Sciatic nerve (tissue), 2 donors: ENCODE measurements at regions of chr20 and their contacts with region 1.

Region 1: DNA sequence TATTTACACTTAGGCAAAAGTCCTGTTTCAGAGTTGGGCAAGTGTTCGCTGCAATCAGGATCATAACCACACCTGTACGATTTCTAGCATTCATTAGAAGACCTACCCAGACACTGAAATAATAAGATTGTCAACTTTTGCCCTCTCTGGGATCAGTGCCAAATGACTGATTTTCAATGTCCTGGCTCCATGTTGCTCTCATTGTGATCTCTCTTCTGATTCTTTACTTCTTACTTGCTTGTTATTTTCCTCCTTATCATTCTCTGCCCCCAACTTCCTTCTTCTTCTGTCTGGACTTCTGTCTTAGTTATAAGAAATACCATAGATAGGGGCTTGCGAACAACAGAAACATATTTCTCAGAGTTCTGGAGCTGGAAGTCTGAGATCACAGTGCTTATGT is 94.4 kb upstream of the BMP2 start:
- DNase-seq: no peak
- ATAC-seq: no peak

Region 2: GRCh38 chr20:4726710-4727397 is 1946.2 kb before region 1 on chr20:
- intact Hi-C with region 1: loop called (anchors 5 kb)
- DNase-seq: no peak
- ATAC-seq: peak; percentile 49

Region 3: GRCh38 chr20:6525447-6526303 is 147.4 kb before region 1 on chr20:
- intact Hi-C with region 1: no loop called
- DNase-seq: no peak
- ATAC-seq: no peak

Region 4: DNA sequence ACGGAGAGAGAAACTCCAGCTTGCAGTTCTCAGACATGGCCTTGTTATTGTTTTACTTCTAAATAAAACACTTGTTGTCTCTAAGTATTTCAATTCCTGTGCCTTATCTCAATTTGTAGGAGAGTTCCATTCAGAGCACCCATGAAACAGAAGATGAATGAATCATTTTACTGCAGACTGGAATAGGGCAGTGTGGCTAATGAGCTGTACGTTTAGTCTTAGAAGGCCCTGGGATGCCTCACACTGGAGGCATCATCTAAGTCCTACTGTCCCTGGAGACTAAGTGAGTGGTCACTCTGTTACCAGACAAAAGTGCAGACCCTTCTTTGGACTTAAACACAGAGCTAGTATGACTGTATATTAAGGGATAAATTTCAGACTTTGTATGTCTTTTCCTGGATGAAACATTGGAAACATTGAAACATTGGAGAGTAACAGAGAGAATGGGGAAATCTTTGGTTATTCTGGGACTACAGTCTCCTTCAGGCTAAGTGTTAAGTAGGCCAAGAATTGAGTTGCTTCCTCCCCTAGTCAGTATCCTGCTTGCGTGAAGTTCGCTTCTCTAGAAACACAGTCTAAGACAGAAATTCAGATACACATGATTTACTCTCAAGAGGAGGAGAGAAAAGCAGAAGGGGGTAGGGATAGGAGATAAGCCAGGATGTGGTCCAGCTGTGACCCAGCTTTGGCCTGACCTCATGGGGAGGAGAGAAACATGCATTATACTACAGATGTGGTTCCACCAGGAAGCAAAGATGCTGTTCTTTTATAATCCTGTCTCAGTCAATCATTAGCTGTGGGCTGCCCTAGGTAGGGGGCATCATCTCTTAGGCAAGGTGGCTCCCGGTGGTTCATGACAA is 73.0 kb before region 1 on chr20:
- intact Hi-C with region 1: no loop called
- DNase-seq: no peak
- ATAC-seq: no peak